A673 (cell line): ENCODE measurements at regions of chr1 and their contacts with region 1.

Region 1: DNA sequence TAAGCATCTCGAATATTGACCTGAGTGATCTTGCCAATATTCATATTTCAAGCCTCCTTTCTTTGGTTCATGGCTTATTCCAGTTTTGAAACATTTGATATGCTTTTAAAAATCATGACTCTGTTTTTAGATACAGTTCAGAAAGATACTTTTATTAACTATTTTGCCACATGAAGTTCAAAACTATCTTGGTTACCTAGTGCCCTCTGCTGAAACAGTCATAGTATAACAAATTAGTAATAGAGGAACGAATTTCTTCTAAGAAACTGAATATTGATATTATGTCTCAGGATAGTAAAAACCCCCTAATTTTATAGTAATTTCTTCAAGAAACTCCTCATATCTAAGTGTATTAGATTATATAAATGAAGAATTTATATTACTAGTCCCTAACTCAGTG is 52.6 kb upstream of the RC3H1 start:
- DNase-seq: peak; percentile 44
- H3K4me3 ChIP-seq: no peak overlapping the region
- H3K27ac ChIP-seq: no peak overlapping the region
- H3K4me1 ChIP-seq: no peaks in the 10 kb centered on the region
- H3K27me3 ChIP-seq: no peaks in the 10 kb centered on the region
- CTCF ChIP-seq: peak; percentile 65

Region 2: GRCh38 chr1:173420330-173420806 is 654.4 kb before region 1 on chr1:
- CTCF ChIA-PET with region 1: no interaction called
- POLR2A ChIA-PET with region 1: no interaction called
- intact Hi-C with region 1: loop called (anchors 5 kb)
- DNase-seq: peak; percentile 85
- H3K4me3 ChIP-seq: no peak overlapping the region
- H3K27ac ChIP-seq: no peak overlapping the region
- H3K4me1 ChIP-seq: no peaks in the 10 kb centered on the region
- H3K27me3 ChIP-seq: no peaks in the 10 kb centered on the region
- CTCF ChIP-seq: peak; percentile 90

Region 3: DNA sequence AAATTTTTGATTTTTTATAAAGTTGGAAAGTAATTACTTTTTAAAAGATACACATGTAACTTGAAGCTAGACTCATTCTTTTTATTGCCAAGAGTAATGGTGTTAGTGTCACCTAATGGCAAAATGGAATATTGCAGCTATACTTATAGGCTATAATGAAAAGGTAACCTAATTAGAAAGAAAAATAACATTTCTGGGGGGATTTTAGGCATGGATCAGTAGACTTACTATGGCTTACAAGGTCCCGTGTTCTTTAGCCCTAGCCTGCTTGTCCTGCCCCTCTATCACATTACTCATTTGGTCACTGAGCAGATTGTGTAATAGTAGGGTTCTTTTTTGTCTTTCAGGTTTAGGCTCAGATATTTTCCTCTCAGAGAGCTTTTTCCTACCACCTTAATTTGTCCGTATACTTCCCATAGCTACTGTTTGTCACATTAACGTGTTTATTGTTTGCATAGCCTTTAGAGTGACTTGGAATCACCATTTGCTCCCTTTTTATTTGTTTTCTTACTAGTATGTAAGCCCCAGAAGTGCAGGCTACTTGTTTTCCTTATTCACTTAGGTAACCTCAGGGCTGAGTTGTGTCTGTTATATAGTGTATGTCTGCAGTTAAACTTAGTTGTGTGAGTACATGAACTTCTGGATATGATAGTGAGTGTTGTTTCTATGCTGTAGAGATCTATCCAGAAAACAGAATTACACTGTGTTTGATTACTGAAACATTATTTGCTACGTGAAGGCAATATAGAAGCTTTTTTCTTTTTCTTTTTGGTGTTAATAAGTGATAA is 143.2 kb after region 1 on chr1:
- CTCF ChIA-PET with region 1: no interaction called
- POLR2A ChIA-PET with region 1: no interaction called
- intact Hi-C with region 1: loop called (anchors 10 kb)
- DNase-seq: peak; percentile 60
- H3K4me3 ChIP-seq: no peak overlapping the region
- H3K27ac ChIP-seq: no peak overlapping the region
- H3K4me1 ChIP-seq: peaks cover 3% of the 10 kb centered on the region
- H3K27me3 ChIP-seq: no peaks in the 10 kb centered on the region
- CTCF ChIP-seq: peak; percentile 81